Vagina (tissue), 2 donors: ENCODE measurements at regions of chr10 and their contacts with region 1.

Region 1: GRCh38 chr10:80202934-80203834 is 2.2 kb downstream of the ANXA11 start:
- DNase-seq: no peak
- H3K4me3 ChIP-seq: peak overlapping the region; percentile 90 to 98
- H3K27ac ChIP-seq: peak overlapping the region; percentile 98
- H3K4me1 ChIP-seq: peaks cover 89% of the 10 kb centered on the region
- H3K27me3 ChIP-seq: no peaks in the 10 kb centered on the region
- CTCF ChIP-seq: no peak
- POLR2A ChIP-seq: peak in 1 of 2 donors; percentile 6

Region 2: DNA sequence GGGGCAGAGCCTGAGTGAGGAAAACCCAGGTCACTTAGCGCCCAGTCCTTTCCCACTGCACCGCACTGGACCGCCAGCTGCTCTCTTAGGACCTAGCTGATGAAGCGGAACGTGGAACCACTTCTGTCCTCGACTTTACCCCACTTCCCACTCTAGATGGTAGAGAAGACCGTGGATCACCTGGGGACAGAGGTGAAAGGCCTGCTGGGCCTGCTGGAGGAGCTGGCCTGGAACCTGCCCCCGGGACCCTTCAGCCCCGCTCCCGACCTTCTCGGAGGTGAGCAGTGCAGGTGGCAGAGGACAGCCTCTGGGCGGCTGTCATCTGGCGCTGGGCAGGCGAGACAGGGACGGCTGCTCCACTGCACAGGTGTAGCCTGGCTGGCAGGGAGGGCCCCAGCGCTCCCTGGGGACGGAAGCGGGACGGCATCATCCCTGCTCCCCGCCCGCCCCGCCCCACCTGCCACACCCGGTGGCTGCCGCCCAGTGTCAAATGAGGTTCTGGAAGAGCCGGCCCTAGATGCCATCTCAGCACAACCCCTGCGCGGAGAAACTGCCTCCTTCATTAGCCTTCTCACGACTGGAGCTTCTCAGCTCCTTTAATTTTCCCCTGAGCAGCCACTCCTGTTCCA is 59.0 kb before region 1 on chr10:
- intact Hi-C with region 1: loop called (anchors 5 kb)
- DNase-seq: peak; percentile 85 to 91
- H3K4me3 ChIP-seq: peak overlapping the region in 1 of 2 donors; percentile 19
- H3K27ac ChIP-seq: peak overlapping the region; percentile 82
- H3K4me1 ChIP-seq: peaks cover 18% of the 10 kb centered on the region
- H3K27me3 ChIP-seq: no peaks in the 10 kb centered on the region
- CTCF ChIP-seq: no peak
- POLR2A ChIP-seq: no peak

Region 3: DNA sequence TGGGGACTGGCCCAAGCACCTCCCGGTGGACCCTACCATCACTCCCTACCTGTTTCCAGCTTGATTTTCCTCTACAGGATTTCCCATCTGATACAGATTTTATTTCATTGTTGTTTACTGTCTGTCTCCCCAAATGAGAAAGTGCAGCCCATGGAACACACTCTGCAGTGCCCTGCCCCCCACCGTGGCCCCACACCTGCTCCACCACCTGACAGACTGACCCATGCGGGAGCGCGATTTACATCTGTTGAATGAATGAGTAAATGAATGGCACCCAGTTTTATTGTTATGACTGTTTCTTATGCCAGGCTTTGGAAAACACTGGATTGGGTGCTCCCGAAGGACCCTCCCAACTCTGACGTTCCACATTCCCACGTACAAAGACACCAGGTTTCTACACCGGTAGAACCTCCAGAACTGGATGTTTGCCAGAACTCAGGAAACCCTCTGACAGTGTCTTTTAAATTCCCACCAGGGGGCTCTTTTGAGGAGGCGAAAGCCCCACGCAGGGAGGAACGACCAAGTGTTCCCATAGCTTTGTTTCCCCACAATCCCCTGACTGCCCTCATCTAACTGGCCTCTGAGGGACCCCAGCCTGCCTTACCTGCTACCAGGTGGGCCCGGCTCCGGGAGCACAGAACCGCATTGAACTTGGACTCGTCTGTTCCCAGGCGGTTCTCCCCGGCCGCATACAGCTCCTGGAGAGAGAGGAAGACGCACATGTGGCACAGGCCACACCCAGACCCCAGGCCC is 41.7 kb before region 1 on chr10:
- intact Hi-C with region 1: loop called (anchors 5 kb)
- DNase-seq: no peak
- H3K4me3 ChIP-seq: no peak overlapping the region
- H3K27ac ChIP-seq: peak overlapping the region; percentile 86
- H3K4me1 ChIP-seq: peaks cover 87% of the 10 kb centered on the region
- H3K27me3 ChIP-seq: no peaks in the 10 kb centered on the region
- CTCF ChIP-seq: no peak
- POLR2A ChIP-seq: no peak

Region 4: DNA sequence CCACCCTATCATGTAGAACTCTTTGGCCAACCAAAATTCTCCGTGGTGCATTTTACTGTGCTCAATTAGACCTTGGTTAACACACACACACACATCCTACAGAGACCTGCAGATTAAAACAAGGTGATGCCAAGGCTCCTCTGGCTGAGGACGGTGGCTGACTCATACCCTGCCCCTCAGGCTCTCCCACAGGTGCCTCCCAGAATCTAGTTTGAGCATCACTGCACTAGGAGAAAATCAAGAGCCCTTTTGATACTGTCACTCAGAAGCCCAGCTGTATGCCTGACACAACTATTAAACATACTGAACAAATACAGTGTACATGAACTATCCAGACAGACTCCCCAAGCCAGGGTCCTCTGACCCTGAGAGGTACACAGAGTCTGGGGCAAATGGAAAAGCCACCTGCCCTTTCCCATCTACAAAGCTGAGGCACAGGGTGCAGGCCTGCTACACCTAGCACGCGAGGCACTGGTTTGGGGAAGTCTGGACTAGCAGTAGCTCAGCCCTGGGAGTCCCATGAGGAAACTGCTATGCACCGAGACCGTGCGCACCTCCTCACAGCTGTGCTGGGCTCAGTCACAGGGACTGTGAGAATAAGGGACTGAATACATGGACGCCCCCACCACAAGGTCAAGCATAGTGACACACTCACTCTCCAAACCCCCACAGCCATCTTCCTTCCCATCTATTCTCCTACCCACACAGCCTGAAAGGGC is 77.9 kb after region 1 on chr10:
- intact Hi-C with region 1: no loop called
- DNase-seq: no peak
- H3K4me3 ChIP-seq: no peak overlapping the region
- H3K27ac ChIP-seq: no peak overlapping the region
- H3K4me1 ChIP-seq: no peaks in the 10 kb centered on the region
- H3K27me3 ChIP-seq: no peaks in the 10 kb centered on the region
- CTCF ChIP-seq: no peak
- POLR2A ChIP-seq: no peak

Region 5: GRCh38 chr10:80408242-80409101 is 205.3 kb after region 1 on chr10 and contains the start of gene PRXL2A:
- intact Hi-C with region 1: no loop called
- DNase-seq: no peak
- H3K4me3 ChIP-seq: peak within 1 kb of the TSS; percentile 73 to 81
- H3K27ac ChIP-seq: peak within 1 kb of the TSS; percentile 94
- H3K4me1 ChIP-seq: peaks cover 59% of the 10 kb centered on the region
- H3K27me3 ChIP-seq: no peaks in the 10 kb centered on the region
- CTCF ChIP-seq: no peak
- POLR2A ChIP-seq: peak in 1 of 2 donors; percentile 32
- total RNA-seq, gene PRXL2A: 62.4 TPM